KBM-7 (cell line): ENCODE measurements at regions of chr22 and their contacts with region 1.

Region 1: GRCh38 chr22:22558972-22559603 is at the start of gene PRAME:
- DNase-seq: peak; percentile 97

Region 2: GRCh38 chr22:22463855-22464540 is 95.1 kb before region 1 on chr22:
- in situ Hi-C with region 1: loop called (anchors 25 kb)
- DNase-seq: peak; percentile 76